Endothelial cell of umbilical vein (primary cell): ENCODE measurements at regions of chr3 and their contacts with region 1.

Region 1: GRCh38 chr3:151770956-151771355 is 37.2 kb downstream of the AADACL2 start:
- DNase-seq: peak; percentile 79
- H3K4me3 ChIP-seq: peak overlapping the region in 1 of 3 experiments; percentile 16
- H3K27ac ChIP-seq: peak overlapping the region; percentile 80
- H3K4me1 ChIP-seq: peaks cover 53% of the 10 kb centered on the region
- H3K27me3 ChIP-seq: no peaks in the 10 kb centered on the region
- CTCF ChIP-seq: no peak
- POLR2A ChIP-seq: no peak

Region 2: DNA sequence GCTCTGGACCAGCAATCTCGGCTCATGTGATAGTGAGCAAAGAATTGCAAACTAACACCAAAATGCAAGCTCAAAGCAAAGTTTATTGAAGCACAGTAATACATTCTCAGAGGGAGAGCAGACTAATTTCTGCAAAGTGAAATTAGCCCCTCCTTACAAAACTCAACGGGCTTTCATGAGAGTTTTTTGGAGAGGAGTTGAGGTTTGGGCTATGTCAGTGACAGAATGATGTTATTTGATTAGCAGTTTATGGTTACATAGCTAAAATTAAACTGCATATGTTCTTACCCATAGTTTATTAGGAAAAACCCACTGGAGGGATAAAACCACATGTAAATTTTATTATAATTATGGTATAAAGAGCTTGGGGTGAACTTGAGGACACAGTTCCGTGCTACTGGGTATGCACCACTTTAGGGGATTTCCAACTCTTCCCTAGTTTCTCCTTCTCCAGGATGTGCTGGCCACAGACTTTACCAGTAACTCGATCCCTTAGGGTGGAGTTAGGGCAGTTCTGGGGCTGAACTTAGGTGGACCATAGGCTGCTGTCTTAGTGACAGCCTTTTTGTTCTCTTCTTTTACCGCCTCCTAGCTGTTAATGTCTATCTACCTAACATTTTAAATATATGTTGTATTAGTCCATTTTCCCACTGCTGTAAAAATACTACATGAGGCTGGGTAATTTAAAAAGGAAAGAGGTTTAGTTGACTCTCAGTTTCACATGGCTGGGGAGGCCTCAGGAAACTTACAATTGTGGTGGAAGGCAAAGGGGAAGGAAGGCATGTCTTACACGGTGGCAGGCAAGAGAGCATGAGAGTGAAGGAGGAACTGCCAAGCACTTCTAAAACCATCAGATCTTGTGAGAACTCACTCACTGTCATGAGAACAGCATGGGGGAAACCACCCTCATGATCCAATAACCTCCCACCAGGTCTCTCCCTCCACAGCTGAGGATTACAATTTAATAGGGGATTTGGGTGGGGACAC is 46.1 kb before region 1 on chr3:
- CTCF ChIA-PET with region 1: no interaction called
- POLR2A ChIA-PET with region 1: no interaction called
- dilution Hi-C with region 1: no loop called
- intact Hi-C with region 1: no loop called
- DNase-seq: no peak
- H3K4me3 ChIP-seq: no peak overlapping the region
- H3K27ac ChIP-seq: no peak overlapping the region
- H3K4me1 ChIP-seq: no peaks in the 10 kb centered on the region
- H3K27me3 ChIP-seq: no peaks in the 10 kb centered on the region
- CTCF ChIP-seq: no peak
- POLR2A ChIP-seq: no peak

Region 3: DNA sequence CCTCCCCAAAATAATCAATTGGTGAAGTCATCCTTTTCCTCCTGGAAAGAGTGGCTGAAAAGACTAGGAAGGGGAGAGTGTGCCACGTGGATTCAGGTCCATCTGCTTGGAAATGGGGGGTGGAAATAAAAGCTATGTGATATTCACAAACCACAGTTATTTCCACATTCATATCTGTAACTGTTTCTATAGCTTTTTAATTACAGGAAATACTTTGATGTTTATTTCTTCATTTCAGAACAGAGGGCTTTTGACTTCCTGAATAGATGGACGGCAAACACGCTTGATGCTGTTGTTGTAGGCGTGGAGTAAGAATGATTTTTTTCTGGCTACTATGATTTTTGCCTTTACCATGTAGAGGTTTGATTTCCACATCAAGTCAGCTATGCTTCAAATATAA is 27.1 kb before region 1 on chr3:
- CTCF ChIA-PET with region 1: no interaction called
- POLR2A ChIA-PET with region 1: no interaction called
- dilution Hi-C with region 1: no loop called
- intact Hi-C with region 1: loop called (anchors 1 kb)
- DNase-seq: peak; percentile 28
- H3K4me3 ChIP-seq: no peak overlapping the region
- H3K27ac ChIP-seq: no peak overlapping the region
- H3K4me1 ChIP-seq: peaks cover 6% of the 10 kb centered on the region
- H3K27me3 ChIP-seq: peaks cover 0 to 9% of the 10 kb centered on the region in 2 experiments
- CTCF ChIP-seq: no peak
- POLR2A ChIP-seq: no peak

Region 4: DNA sequence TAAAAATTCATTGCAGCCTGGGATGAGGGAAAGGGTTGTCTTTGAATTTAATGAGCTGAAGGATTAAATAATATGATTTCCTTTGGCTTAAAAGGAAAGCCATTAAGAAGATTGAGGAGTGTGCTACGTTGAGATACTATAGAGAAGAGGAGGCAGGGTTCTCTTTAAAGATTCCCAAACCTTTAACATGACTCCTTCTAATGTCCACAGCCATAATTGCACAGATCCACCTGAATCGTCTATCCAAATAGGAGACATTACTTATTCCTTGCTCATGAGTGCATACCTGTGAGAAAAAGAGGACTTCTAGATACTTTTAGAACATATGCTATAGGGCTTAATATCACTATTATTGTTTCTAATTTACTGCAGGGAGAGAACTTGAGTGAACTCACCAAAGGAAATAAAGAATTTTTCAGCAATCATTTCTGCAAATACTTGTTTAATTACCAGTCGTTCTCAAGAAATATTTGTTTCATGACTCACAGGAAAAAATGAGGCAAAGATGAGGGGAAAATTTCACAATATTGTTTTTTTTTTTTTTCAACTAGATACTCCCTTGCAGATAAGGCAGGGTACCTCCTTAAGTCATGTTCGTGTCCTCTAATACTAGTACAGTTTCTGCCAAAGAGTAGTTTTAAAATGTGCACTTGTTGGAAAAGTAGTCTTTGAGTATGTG is 93.6 kb after region 1 on chr3:
- CTCF ChIA-PET with region 1: no interaction called
- POLR2A ChIA-PET with region 1: no interaction called
- dilution Hi-C with region 1: no loop called
- intact Hi-C with region 1: loop called (anchors 2 kb)
- DNase-seq: peak; percentile 84
- H3K4me3 ChIP-seq: peak overlapping the region in 1 of 3 experiments; percentile 17
- H3K27ac ChIP-seq: peak overlapping the region; percentile 66
- H3K4me1 ChIP-seq: peaks cover 31% of the 10 kb centered on the region
- H3K27me3 ChIP-seq: no peaks in the 10 kb centered on the region
- CTCF ChIP-seq: no peak
- POLR2A ChIP-seq: no peak

Region 5: DNA sequence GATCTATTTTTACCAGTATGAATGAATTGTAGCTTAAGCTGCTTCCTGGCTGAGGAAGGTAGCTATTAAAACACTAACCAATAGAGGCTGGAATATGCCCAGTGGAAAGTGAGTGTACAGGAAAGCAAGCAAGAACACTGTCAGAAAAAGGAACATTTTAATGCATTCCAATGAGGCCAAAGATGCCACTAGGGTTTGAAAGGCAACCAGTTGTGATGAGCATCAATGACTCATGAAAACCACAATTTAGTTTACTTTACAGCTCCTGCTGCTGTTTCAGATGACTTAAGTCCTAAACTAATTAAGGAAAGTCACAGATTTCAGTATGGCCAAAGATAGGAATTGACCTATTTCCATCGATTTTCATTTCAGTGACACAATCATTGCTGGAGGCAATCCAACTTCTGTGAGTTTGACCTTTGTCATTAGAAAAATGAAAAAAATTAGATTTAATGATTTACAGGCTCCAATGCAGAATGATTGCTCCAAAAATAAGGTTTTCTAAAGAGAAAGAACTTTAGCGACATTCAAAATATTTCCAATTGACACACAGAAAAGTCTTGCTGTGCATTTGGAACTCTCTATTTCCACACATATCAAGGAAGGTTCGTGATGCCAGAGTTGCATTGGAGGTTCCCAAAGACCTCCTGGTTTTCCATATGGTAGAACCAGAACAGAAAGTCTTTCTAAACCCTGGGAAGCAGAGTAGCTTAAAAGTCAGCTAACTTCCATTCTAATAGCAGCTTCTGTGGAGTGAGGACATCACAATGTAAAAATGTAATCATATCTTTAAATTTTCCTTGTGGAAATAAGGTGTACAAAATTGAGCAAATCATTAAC is 205.5 kb after region 1 on chr3:
- CTCF ChIA-PET with region 1: no interaction called
- POLR2A ChIA-PET with region 1: no interaction called
- dilution Hi-C with region 1: no loop called
- intact Hi-C with region 1: loop called (anchors 1 kb)
- DNase-seq: peak; percentile 99
- H3K4me3 ChIP-seq: peak overlapping the region in 1 of 3 experiments; percentile 3
- H3K27ac ChIP-seq: peak overlapping the region; percentile 90
- H3K4me1 ChIP-seq: peaks cover 32% of the 10 kb centered on the region
- H3K27me3 ChIP-seq: no peaks in the 10 kb centered on the region
- CTCF ChIP-seq: no peak
- POLR2A ChIP-seq: no peak

Region 6: DNA sequence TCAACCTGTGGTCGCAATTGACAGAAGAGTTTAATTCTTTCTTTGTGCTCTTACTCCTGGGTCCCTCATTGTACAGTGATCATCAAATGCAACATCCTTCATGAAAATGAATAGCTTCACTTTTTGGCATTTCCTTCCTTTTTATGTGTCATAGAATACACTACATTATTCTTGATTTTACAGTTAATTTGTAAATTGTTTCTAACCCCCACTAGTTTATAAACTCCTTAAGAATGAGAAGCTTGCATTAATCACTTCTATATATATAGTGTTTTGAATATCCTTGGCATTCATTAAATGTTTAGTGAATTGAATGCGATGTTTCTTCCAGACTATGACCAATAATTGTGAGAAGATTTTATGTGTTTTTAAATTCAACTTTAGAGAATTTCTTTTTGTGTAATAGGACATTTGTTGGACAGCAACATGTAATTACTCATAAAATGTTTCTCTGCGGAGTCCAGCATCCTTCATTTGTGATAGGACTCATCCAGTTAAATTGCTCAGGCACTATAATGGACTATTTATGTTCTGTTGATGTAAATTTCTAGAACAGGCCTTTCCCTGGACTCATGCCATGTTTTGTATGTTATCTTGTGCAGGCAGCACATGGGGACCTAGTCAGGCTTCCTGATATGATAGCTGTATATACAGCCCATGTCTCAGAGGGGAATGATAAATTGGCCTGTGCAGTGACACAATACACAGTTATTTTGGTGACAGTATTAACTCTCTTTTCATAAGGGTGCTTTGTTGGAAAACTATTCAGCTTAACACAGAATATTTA is 549.1 kb after region 1 on chr3:
- CTCF ChIA-PET with region 1: no interaction called
- POLR2A ChIA-PET with region 1: no interaction called
- dilution Hi-C with region 1: no loop called
- intact Hi-C with region 1: loop called (anchors 1 kb)
- DNase-seq: peak; percentile 99
- H3K4me3 ChIP-seq: no peak overlapping the region
- H3K27ac ChIP-seq: peak overlapping the region; percentile 83
- H3K4me1 ChIP-seq: peaks cover 96% of the 10 kb centered on the region
- H3K27me3 ChIP-seq: no peaks in the 10 kb centered on the region
- CTCF ChIP-seq: no peak
- POLR2A ChIP-seq: peak; percentile 84

Region 7: GRCh38 chr3:152595975-152596790 is 825.2 kb after region 1 on chr3:
- CTCF ChIA-PET with region 1: no interaction called
- POLR2A ChIA-PET with region 1: no interaction called
- dilution Hi-C with region 1: no loop called
- intact Hi-C with region 1: loop called (anchors 5 kb)
- DNase-seq: peak; percentile 97
- H3K4me3 ChIP-seq: peak overlapping the region in 1 of 3 experiments; percentile 42
- H3K27ac ChIP-seq: peak overlapping the region; percentile 78
- H3K4me1 ChIP-seq: peaks cover 14% of the 10 kb centered on the region
- H3K27me3 ChIP-seq: no peaks in the 10 kb centered on the region
- CTCF ChIP-seq: no peak
- POLR2A ChIP-seq: peak; percentile 55